ENCODE measurements at regions of chr3 and their contacts with region 1.

Region 1: GRCh38 chr3:127831723-127832172 is 9.4 kb upstream of the MGLL start:
- DNase-seq: peak; percentile 90
- H3K4me3 Mint-ChIP-seq: no peak overlapping the region
- H3K27ac Mint-ChIP-seq: no peak overlapping the region
- H3K4me1 Mint-ChIP-seq: peaks cover 25% of the 10 kb centered on the region
- H3K27me3 Mint-ChIP-seq: no peaks in the 10 kb centered on the region
- CTCF ChIP-seq: peak; percentile 96

Region 2: DNA sequence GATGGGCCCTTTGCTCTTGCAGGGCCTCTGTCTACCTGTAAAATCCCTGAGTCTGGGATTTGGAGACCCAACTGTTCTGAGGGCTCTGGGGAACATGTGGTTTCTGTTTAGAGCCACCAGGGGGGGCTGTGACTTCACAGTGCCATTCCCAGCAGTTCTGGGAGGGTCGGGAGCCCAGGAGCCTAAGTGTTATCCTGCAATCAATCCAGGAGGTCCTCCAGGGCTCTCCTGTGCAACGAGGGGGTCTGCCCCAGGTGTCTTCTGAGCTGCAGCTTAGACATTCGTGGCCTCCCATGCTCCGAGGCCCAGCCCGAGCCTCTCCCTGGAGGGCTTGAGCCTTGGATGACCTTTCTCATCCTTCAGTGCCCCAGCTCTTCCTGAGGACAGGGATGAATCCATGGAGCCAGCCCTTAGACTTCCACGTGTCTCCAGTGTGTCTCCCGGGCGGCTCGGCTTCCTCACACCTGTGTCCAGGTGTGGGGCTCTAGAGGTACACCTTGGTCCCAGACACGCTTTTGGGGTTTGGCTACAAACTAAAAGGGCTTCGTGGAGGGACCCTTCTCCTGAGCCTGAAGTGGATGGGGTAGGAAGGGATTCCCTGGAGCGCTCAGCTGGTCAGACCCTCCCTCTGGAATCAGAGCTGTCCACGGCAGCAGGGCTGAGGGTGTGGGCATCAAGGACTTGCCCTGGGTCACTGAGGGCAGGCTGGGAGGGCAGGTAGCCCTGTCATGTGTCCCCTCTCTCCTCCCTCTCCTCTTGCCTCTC is 179.3 kb before region 1 on chr3:
- CTCF ChIA-PET with region 1: interaction called, 3 read pairs
- intact Hi-C with region 1: loop called (anchors 1 kb)
- DNase-seq: peak; percentile 78
- H3K4me3 Mint-ChIP-seq: no peak overlapping the region
- H3K27ac Mint-ChIP-seq: no peak overlapping the region
- H3K4me1 Mint-ChIP-seq: no peaks in the 10 kb centered on the region
- H3K27me3 Mint-ChIP-seq: no peaks in the 10 kb centered on the region
- CTCF ChIP-seq: peak; percentile 97

Region 3: DNA sequence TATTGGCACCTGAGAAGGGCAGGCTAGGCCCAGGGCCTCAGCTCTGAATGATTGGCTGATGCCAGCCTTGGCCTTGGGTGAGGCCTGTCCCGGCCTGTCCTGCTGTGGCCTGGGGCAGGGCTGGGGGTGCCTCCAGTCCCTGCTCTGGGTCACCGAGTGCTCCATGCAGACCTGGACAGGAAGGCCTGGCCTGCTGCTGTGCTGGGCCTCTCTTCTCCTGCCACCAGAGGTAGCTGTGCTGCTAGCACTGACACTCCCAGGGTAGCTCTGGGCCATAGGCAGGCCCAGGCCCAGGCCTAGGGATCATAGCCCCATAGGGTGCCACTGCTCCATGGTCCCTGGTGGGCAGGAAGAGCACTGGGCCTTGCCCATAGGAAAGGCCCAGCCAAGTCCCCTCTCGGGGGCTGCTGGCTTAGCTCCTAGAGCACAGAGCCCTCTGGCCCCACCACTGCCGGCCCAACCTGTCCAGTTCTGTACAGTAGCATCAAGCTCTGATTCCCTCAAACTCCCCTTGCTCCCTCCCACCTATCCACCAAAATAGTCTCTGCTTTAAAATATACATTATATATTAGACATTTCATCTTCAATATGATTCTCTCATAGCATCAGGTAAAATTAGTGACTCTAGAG is 140.8 kb before region 1 on chr3:
- CTCF ChIA-PET with region 1: interaction called, 20 read pairs
- intact Hi-C with region 1: loop called (anchors 1 kb)
- DNase-seq: peak; percentile 81
- H3K4me3 Mint-ChIP-seq: no peak overlapping the region
- H3K27ac Mint-ChIP-seq: no peak overlapping the region
- H3K4me1 Mint-ChIP-seq: no peaks in the 10 kb centered on the region
- H3K27me3 Mint-ChIP-seq: no peaks in the 10 kb centered on the region
- CTCF ChIP-seq: peak; percentile 75

Region 4: DNA sequence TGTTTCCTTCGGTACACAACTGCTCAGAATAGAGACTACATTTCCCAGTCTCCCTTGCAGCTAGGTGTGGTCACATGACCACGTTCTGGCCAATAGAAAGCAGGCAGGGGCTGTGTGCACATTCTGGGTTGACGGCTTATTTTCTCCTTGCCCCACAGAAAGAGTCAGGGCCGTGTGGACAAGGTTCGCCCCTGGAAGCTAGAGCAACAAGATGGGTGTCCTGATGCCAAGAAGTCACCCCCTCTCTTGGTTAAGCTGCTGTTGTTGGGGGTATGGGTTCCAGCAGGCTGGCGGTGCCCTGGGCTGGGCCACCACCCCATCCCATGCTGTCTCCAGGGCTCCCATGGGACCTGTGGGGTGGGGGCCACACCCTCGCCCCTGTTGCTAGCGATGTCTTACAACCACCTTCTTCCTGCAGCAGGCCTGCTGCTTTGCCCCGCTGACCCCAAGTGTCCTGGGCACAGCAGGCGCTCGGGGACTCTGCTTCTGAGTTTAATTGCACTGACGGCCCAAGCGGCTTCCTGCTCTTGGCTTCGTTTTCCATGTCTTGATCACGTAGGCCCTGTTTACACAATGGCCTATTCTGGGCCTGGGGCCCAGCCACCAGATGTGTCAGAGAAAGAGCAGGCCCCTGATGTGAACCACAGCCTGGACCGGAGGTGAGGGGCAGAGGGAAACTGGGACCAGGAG is 134.1 kb before region 1 on chr3:
- CTCF ChIA-PET with region 1: interaction called, 20 read pairs
- intact Hi-C with region 1: loop called (anchors 1 kb)
- DNase-seq: peak; percentile 73
- H3K4me3 Mint-ChIP-seq: no peak overlapping the region
- H3K27ac Mint-ChIP-seq: peak overlapping the region; percentile 19
- H3K4me1 Mint-ChIP-seq: no peaks in the 10 kb centered on the region
- H3K27me3 Mint-ChIP-seq: no peaks in the 10 kb centered on the region
- CTCF ChIP-seq: no peak

Region 5: DNA sequence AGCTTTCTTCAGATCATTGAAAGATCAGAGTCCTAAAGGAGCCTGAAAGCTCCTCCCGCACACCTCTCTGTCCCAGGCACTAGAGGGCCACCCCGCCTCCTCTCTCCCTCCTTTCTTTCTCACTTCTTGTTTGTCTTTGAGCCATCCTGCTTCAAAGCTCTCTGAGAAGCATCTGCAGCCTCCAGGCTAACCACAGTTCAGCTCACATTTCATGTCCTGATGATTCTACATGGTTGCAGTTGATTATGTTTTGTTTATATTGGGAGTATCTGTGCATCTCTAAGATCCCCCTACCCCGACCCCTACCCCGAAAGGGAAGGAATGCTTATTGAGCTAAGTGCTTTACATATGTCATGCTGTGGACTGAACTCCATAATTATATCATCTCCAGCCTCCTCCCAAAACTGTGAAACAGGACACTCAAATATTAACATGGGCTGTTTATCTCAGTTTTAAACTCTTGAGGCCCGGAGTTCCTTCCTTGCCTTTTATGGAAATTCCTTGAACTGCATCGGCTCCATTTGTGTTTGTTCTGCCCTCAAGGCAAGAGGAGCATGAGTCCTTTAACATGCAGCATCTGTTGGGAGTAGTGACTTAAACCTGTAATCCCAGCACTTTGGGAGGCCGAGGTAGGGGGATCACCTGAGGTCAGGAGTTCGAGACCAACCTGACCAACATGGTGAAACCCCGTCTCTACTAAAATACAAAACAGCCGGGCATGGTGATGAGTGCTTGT is 40.4 kb before region 1 on chr3:
- CTCF ChIA-PET with region 1: interaction called, 14 read pairs
- intact Hi-C with region 1: loop called (anchors 5 kb)
- DNase-seq: peak; percentile 75
- H3K4me3 Mint-ChIP-seq: no peak overlapping the region
- H3K27ac Mint-ChIP-seq: no peak overlapping the region
- H3K4me1 Mint-ChIP-seq: peaks cover 29% of the 10 kb centered on the region
- H3K27me3 Mint-ChIP-seq: no peaks in the 10 kb centered on the region
- CTCF ChIP-seq: no peak

Region 6: DNA sequence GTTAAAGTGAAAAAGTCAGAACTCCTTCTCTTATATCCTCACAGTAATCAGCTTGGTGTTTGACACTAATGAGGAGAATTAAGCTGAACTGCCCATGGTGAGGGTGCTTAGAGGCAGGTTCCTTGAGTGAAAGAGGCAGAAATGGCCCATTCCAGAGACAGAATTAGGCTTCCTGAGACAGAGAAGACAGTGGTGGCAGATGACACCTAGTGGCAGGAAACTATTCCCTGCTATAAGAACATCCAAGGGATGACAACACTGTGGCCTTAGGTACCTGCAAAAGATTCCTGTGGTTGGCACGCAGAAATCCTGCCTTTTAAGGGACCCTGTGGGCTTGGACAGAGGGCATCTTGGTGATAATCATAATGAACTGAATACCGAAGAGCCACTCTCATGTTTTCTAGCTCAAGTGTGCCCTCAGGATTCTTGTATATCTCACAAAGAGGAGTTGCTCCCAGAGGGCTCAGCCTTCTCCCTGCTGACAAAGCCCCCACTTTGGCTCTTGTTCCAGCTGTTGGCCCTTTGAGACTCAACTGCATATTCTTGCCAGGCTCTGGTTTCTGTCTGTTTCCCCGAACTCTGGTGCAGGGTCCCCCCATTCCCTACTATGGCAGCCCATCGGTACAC is 139.3 kb after region 1 on chr3:
- CTCF ChIA-PET with region 1: no interaction called
- intact Hi-C with region 1: loop called (anchors 5 kb)
- DNase-seq: peak; percentile 54
- H3K4me3 Mint-ChIP-seq: no peak overlapping the region
- H3K27ac Mint-ChIP-seq: no peak overlapping the region
- H3K4me1 Mint-ChIP-seq: no peaks in the 10 kb centered on the region
- H3K27me3 Mint-ChIP-seq: peaks cover 92% of the 10 kb centered on the region
- CTCF ChIP-seq: peak; percentile 88

Measured in Calu3 (cell line).